ENCODE measurements at regions of chr19 and their contacts with region 1.

Region 1: GRCh38 chr19:19033426-19034203 is at the starts of genes ARMC6 and SUGP2:
- DNase-seq: peak; percentile 92
- ATAC-seq: peak; percentile 78
- H3K4me3 Mint-ChIP-seq: peak within 1 kb of the TSS; percentile 98
- H3K27ac Mint-ChIP-seq: peak within 1 kb of the TSS; percentile 96
- H3K4me1 Mint-ChIP-seq: peaks cover 31% of the 10 kb centered on the region
- H3K27me3 Mint-ChIP-seq: no peaks in the 10 kb centered on the region
- total RNA-seq, gene ARMC6: 33.0 to 40.8 TPM
- total RNA-seq, gene SUGP2: 89.8 to 104 TPM

Region 2: GRCh38 chr19:18291590-18292461 is 741.8 kb before region 1 on chr19:
- CTCF ChIA-PET with region 1: no interaction called
- POLR2A ChIA-PET with region 1: no interaction called
- intact Hi-C with region 1: loop called in 1 of 2 experiments (anchors 5 kb)
- DNase-seq: peak; percentile 96
- ATAC-seq: peak; percentile 38
- H3K4me3 Mint-ChIP-seq: peak overlapping the region; percentile 87
- H3K27ac Mint-ChIP-seq: peak overlapping the region; percentile 99
- H3K4me1 Mint-ChIP-seq: peaks cover 63% of the 10 kb centered on the region
- H3K27me3 Mint-ChIP-seq: no peaks in the 10 kb centered on the region

Region 3: DNA sequence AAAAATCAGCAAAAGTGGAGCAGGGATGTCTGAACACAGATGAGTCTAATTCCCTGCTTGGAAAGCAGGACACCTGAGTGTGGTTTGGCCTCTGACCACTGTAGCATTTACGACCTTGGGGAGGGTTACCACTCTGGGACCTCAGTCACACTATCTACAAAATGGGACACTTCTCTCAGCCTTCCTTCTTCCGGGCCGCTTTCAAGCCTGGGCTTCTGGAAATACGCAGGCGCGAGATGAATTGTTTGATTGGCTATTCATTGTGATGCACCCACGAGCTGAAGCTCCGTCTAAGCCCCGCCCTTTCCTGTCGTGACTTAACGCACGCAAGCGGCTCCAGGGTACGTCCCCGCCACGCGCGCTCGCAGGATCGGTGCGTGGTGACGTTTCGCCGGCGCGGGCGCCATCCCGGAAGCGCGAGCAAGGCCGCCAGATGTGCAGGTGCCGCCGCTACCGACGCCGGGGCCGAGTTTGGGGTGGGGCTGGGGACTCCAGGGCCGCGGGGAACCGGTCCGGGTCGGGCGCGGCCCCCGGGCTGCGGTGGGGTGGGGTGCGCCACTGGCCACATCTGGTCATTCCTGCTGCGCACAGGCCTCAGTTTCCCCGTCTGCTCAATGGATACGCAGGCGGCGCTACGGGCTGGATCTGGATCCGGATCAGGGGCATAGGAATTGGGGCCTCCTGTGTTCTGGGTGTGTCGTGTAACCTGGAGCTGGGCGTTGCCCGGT is 476.0 kb before region 1 on chr19 and contains the start of gene KXD1:
- CTCF ChIA-PET with region 1: interaction called, 3 read pairs
- POLR2A ChIA-PET with region 1: no interaction called
- intact Hi-C with region 1: loop called in 1 of 2 experiments (anchors 1 kb)
- DNase-seq: peak; percentile 99
- ATAC-seq: peak; percentile 99
- H3K4me3 Mint-ChIP-seq: peak within 1 kb of the TSS; percentile 91
- H3K27ac Mint-ChIP-seq: peak within 1 kb of the TSS; percentile 95
- H3K4me1 Mint-ChIP-seq: peaks cover 20% of the 10 kb centered on the region
- H3K27me3 Mint-ChIP-seq: no peaks in the 10 kb centered on the region
- total RNA-seq, gene KXD1: 121 to 170 TPM

Region 4: DNA sequence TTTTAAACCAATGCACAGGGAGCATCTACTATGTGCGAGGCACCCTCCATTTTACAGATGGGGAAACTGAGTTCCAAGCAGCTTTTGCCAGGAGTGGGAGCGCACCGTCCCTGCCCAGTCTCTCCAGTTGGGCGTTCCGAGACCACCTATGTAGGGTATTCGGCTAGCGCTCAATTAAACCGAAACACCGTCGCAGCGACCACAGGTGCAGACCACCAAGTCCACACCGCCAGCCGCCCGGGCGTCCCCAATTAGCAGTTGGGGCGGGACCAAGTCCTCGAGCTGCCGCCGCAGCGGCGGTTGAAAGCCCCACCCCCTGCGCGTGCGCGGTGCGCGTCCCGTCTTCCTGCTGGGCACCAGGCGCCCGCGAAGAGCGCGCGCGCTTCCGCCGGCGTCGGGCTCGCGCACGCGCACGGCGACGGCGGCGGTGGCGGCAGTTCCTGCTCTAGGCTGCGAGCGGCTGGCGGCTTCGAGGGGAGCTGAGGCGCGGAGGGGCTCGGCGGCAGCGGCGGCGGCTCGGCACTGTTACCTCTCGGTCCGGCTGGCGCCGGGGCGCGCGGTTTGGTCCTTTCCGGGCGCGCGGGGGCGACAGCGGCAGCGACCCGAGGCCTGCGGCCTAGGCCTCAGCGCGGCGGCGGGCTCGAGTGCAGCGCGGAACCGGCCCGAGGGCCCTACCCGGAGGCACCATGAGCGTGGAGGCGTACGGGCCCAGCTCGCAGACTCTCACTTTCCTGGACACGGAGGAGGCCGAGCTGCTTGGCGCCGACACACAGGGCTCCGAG is 201.9 kb before region 1 on chr19 and contains the start of gene UPF1:
- CTCF ChIA-PET with region 1: no interaction called
- POLR2A ChIA-PET with region 1: no interaction called
- intact Hi-C with region 1: loop called in 1 of 2 experiments (anchors 2 kb)
- DNase-seq: peak; percentile 98
- ATAC-seq: peak; percentile 82
- H3K4me3 Mint-ChIP-seq: peak within 1 kb of the TSS; percentile 96
- H3K27ac Mint-ChIP-seq: peak within 1 kb of the TSS; percentile 90
- H3K4me1 Mint-ChIP-seq: peaks cover 34% of the 10 kb centered on the region
- H3K27me3 Mint-ChIP-seq: peaks cover 3% of the 10 kb centered on the region
- total RNA-seq, gene UPF1: 72.4 to 74.0 TPM

Region 5: GRCh38 chr19:19203012-19203856 is 169.6 kb after region 1 on chr19 and contains the start of gene NR2C2AP:
- CTCF ChIA-PET with region 1: no interaction called
- POLR2A ChIA-PET with region 1: no interaction called
- intact Hi-C with region 1: loop called in 1 of 2 experiments (anchors 1 kb)
- DNase-seq: peak; percentile 96
- ATAC-seq: peak; percentile 95
- H3K4me3 Mint-ChIP-seq: peak within 1 kb of the TSS; percentile 90
- H3K27ac Mint-ChIP-seq: peak within 1 kb of the TSS; percentile 84
- H3K4me1 Mint-ChIP-seq: peaks cover 30% of the 10 kb centered on the region
- H3K27me3 Mint-ChIP-seq: no peaks in the 10 kb centered on the region
- total RNA-seq, gene NR2C2AP: 34.7 to 46.6 TPM